ENCODE measurements at regions of chr22 and their contacts with region 1.

Region 1: DNA sequence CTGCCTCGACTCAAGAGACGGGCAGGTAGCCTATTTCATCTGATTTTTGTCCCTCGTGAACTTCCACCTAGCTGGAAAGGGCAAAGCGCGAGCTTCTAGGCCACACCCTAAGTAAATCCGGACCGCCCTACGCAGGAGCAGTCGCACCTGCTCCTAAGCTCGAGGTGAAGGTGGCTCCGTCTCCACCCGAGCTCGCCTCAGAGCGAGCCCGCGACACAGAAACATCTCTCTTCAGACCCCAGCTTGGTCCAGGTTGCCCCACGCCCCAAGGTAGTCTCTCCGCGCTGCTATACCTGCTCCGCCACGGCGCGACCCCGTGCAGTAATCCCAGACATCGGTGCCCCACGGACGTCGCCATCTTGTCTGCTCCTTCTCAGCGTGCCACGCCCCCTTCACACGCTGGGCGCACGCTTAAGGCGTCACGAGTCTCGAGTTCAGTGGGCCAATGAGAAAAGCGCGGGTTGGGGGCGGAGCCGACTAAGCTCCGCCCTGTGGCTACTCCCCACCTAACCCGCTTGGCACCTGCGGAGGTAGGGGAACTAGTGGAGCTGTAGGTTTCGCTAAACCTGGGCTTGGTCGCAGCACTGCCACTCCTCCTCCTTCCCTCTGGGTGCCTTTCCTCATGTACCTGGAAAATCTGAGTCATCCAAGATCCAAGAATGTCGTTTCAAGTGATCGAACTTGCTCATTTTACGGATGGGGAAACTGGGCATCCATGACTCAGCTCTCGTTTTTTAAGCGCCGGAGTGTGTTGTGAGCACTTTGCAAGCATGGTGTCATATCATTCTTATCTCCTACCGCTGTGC is at the start of gene PISD:
- DNase-seq: peak; percentile 93 to 98 (median 97)
- ATAC-seq: peak; percentile 92 to 93
- H3K4me3 Mint-ChIP-seq: peak within 1 kb of the TSS; percentile 93 to 100 (median 100)
- H3K27ac Mint-ChIP-seq: peak within 1 kb of the TSS; percentile 96 to 100 (median 98)
- H3K4me1 Mint-ChIP-seq: peaks cover 17 to 45% (median 43%) of the 10 kb centered on the region in 4 donors
- H3K27me3 Mint-ChIP-seq: no peaks in the 10 kb centered on the region
- polyA plus RNA-seq, gene PISD: 12.7 to 21.0 (median 17.7) TPM

Region 2: GRCh38 chr22:31520051-31520450 is 142.0 kb before region 1 on chr22:
- POLR2A ChIA-PET with region 1: no interaction called
- DNase-seq: no peak
- ATAC-seq: no peak
- H3K4me3 Mint-ChIP-seq: no peak overlapping the region
- H3K27ac Mint-ChIP-seq: peak overlapping the region in 6 of 10 donors; percentile 3 to 74 (median 63)
- H3K4me1 Mint-ChIP-seq: peaks cover 19 to 64% (median 45%) of the 10 kb centered on the region in 4 donors
- H3K27me3 Mint-ChIP-seq: no peaks in the 10 kb centered on the region

Region 3: DNA sequence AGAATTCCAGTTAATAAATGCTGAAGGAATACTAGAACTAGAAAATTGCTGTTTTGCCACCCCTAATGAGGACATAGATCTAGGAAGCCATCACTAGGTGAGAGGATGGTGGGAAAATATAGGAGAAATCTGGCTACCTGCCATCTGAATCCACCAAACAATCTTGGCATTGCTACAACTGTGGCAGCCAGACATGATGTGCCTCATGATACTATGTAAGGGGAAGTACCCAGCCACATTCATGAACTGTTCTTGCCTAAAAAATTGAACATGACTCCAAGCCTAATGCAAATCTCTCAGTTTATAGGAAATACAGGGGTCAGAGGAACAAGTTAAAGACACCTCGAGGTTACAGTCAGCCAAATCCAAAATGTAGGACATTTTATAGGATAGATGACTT is 92.9 kb before region 1 on chr22:
- POLR2A ChIA-PET with region 1: no interaction called
- DNase-seq: no peak
- ATAC-seq: no peak
- H3K4me3 Mint-ChIP-seq: no peak overlapping the region
- H3K27ac Mint-ChIP-seq: peak overlapping the region in 4 of 10 donors; percentile 62 to 79 (median 66)
- H3K4me1 Mint-ChIP-seq: peaks cover 0 to 4% (median 2%) of the 10 kb centered on the region in 4 donors
- H3K27me3 Mint-ChIP-seq: no peaks in the 10 kb centered on the region

Region 4: GRCh38 chr22:31630331-31631329 is 31.4 kb before region 1 on chr22:
- POLR2A ChIA-PET with region 1: interaction called, 13 read pairs
- DNase-seq: peak; percentile 82 to 94 (median 86)
- ATAC-seq: peak; percentile 90 to 94
- H3K4me3 Mint-ChIP-seq: peak overlapping the region; percentile 83 to 93 (median 88)
- H3K27ac Mint-ChIP-seq: peak overlapping the region; percentile 84 to 97 (median 94)
- H3K4me1 Mint-ChIP-seq: peaks cover 26 to 68% (median 55%) of the 10 kb centered on the region in 4 donors
- H3K27me3 Mint-ChIP-seq: no peaks in the 10 kb centered on the region

Region 5: GRCh38 chr22:31676700-31677099 is 14.6 kb after region 1 on chr22:
- POLR2A ChIA-PET with region 1: interaction called, 68 read pairs
- DNase-seq: peak; percentile 83 to 96 (median 88)
- ATAC-seq: peak; percentile 100
- H3K4me3 Mint-ChIP-seq: peak overlapping the region; percentile 90 to 99 (median 96)
- H3K27ac Mint-ChIP-seq: peak overlapping the region; percentile 94 to 99 (median 98)
- H3K4me1 Mint-ChIP-seq: peaks cover 13 to 20% (median 18%) of the 10 kb centered on the region in 4 donors
- H3K27me3 Mint-ChIP-seq: no peaks in the 10 kb centered on the region

Region 6: GRCh38 chr22:31753634-31754501 is 91.8 kb after region 1 on chr22 and contains the start of gene DEPDC5:
- POLR2A ChIA-PET with region 1: interaction called, 13 read pairs
- DNase-seq: peak; percentile 90 to 98 (median 96)
- ATAC-seq: peak; percentile 76 to 79
- H3K4me3 Mint-ChIP-seq: peak within 1 kb of the TSS; percentile 86 to 97 (median 95)
- H3K27ac Mint-ChIP-seq: peak within 1 kb of the TSS; percentile 94 to 100 (median 100)
- H3K4me1 Mint-ChIP-seq: peaks cover 21 to 46% (median 41%) of the 10 kb centered on the region in 4 donors
- H3K27me3 Mint-ChIP-seq: no peaks in the 10 kb centered on the region
- polyA plus RNA-seq, gene DEPDC5: 3.9 to 10.6 (median 4.5) TPM